MCF 10A (cell line): ENCODE measurements at regions of chr4 and their contacts with region 1.

Region 1: GRCh38 chr4:39638354-39639240 is at the start of gene SMIM14:
- DNase-seq: peak; percentile 98
- H3K4me3 Mint-ChIP-seq: peak within 1 kb of the TSS; percentile 87
- H3K27ac Mint-ChIP-seq: peak within 1 kb of the TSS; percentile 95
- H3K4me1 Mint-ChIP-seq: peaks cover 15% of the 10 kb centered on the region
- H3K27me3 Mint-ChIP-seq: no peaks in the 10 kb centered on the region
- CTCF ChIP-seq: no peak
- total RNA-seq, gene SMIM14: 27.3 and 36.0 TPM in 2 replicates

Region 2: DNA sequence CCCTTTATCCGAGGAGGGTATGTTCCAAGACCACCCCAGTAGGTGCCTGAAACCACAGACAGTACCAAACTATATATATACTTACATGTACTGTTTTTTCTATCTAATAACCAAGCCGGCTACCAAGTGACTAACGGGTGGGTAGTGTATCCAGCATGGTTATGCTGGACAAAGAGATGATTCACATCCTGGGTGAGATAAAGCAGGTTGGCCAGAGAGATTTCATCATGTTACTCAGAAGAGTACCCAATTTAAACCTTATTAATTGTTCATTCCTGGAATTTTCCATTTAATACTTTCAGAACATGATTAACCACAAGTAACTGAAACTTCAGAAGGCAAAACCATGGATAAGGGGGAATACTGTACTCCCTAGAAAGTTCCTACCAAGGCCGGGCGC is 318.9 kb before region 1 on chr4:
- CTCF ChIA-PET with region 1: no interaction called
- POLR2A ChIA-PET with region 1: no interaction called
- intact Hi-C with region 1: no loop called
- DNase-seq: peak; percentile 89
- H3K4me3 Mint-ChIP-seq: no peak overlapping the region
- H3K27ac Mint-ChIP-seq: peak overlapping the region; percentile 75
- H3K4me1 Mint-ChIP-seq: peaks cover 7% of the 10 kb centered on the region
- H3K27me3 Mint-ChIP-seq: no peaks in the 10 kb centered on the region
- CTCF ChIP-seq: no peak

Region 3: DNA sequence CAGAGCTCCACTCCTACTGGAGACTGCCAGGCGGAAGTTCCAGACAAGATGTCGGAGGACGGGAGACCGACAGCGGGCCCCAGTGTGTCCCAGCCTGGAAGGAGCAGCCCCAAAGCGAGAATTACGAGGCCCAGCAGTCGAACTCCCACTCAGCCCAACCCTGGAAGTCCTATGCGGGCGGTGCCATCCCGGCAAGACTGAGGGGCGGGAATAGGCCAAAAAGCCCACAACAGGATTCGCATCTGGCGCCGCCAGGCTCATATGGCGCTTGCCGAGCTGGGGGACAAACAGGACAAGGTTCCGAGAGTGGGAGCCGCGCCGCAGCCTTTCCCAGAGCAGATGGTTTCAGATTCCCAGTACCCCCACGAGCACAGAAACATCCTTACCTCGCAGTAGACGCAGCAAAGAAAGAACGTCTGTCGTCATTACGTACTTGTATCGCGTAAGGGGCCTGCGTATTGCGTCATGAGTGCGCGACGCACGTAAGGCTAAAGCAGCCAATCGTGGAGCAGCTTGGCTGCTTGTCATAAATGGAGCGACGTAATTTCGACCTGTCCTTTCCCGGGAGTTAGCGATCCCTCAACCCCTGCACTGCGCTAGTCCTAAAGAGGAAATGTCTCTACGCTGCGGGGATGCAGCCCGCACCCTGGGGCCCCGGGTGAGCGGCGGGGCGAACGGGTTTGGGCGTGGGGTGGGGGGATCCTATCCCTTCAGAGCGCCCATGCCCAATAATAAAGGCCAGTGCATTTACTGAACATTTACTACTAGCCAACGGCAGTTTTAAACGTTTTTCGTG is 179.9 kb before region 1 on chr4 and contains the starts of genes LIAS and RPL9:
- CTCF ChIA-PET with region 1: no interaction called
- POLR2A ChIA-PET with region 1: interaction called, 79 read pairs
- intact Hi-C with region 1: no loop called
- DNase-seq: peak; percentile 98
- H3K4me3 Mint-ChIP-seq: peak within 1 kb of the TSS; percentile 95
- H3K27ac Mint-ChIP-seq: peak within 1 kb of the TSS; percentile 100
- H3K4me1 Mint-ChIP-seq: peaks cover 7% of the 10 kb centered on the region
- H3K27me3 Mint-ChIP-seq: no peaks in the 10 kb centered on the region
- CTCF ChIP-seq: no peak
- total RNA-seq, gene LIAS: 21.6 and 24.6 TPM in 2 replicates
- total RNA-seq, gene RPL9: 1,405 and 1,620 TPM in 2 replicates

Region 4: DNA sequence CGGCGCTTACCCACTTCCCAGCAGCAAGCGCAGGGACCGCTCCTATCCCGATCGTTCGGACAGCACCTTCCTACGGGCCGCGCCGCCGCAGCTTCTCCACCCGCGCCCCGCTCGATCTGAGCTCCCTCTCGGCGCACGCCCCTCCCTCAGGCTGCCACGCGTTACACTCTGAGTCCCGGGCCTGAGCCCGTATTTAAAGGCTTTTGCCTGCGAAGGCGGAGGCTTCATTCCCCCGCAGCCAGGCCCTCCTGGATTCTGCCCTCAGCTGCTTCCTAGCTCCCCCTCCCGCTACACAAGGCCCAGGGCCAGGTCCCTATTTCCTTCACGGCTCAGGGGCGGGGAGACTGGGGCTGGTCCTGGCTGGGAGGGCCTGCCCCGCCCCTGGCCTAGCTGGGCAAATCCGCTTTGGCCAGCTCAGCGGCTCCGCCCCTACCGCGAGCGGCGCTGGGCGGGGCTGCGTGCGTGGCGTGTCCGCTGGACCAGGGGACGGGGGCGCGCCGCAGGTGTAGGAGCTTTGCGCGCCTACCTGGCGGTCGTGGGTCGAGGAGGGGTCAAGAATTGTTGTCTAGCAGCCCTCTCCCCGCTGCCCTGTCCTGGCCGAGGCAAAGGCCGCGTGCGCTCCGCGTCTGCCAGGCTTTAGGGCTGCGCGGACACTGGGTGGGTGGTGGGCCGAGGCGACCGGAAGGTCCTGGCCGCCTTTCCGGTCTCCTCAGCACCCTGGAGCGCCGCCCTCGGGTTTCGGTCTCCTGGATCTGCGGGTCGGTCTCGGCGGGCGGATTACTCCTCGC is 111.1 kb before region 1 on chr4 and contains the start of gene UGDH:
- CTCF ChIA-PET with region 1: interaction called, 4 read pairs
- POLR2A ChIA-PET with region 1: interaction called, 59 read pairs
- intact Hi-C with region 1: loop called (anchors 1 kb)
- DNase-seq: peak; percentile 98
- H3K4me3 Mint-ChIP-seq: peak within 1 kb of the TSS; percentile 98
- H3K27ac Mint-ChIP-seq: peak within 1 kb of the TSS; percentile 94
- H3K4me1 Mint-ChIP-seq: peaks cover 9% of the 10 kb centered on the region
- H3K27me3 Mint-ChIP-seq: no peaks in the 10 kb centered on the region
- CTCF ChIP-seq: no peak
- total RNA-seq, gene UGDH: 50.9 and 61.7 TPM in 2 replicates

Region 5: DNA sequence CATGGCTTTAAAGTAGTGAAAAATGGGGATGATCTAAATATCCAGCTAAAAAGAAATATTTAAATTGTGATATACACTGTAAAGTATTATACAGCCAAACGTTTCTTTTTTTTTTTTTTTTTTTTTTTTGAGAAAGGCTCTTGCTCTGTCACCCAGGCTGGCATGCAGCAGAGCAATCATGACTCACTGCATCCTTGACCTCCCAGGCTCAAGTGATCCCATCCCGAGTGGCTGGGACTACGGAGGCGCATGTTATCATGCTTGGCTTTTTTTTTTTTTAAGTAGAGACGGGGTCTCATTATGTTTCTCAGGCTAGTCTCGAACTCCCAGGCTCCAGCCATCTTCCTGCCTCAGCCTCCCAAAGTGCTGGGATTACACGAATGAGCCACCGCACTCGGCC is 17.0 kb before region 1 on chr4:
- CTCF ChIA-PET with region 1: interaction called, 7 read pairs
- POLR2A ChIA-PET with region 1: interaction called, 71 read pairs
- intact Hi-C with region 1: loop called (anchors 1 kb)
- DNase-seq: peak; percentile 81
- H3K4me3 Mint-ChIP-seq: no peak overlapping the region
- H3K27ac Mint-ChIP-seq: no peak overlapping the region
- H3K4me1 Mint-ChIP-seq: peaks cover 7% of the 10 kb centered on the region
- H3K27me3 Mint-ChIP-seq: no peaks in the 10 kb centered on the region
- CTCF ChIP-seq: no peak

Region 6: DNA sequence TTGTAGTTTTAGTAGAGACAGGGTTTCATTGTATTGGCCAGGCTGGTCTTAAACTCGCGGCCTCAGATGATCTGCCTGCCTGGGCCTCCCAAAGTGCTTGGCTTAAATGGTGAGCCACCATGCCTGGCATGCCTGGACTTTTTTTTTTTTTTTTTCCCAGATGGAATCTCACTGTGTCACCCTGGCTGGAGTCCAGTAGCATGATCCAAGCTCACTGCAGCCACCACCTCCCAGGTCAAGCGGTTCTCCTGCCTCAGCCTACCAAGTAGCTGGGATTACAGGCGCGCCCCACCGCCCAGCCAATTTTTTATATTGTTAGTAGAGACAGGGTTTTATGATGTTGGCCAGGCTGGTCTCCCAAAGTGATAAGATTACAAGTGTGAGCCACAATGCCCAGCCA is 67.7 kb after region 1 on chr4:
- CTCF ChIA-PET with region 1: no interaction called
- POLR2A ChIA-PET with region 1: interaction called, 112 read pairs
- intact Hi-C with region 1: no loop called
- DNase-seq: peak; percentile 80
- H3K4me3 Mint-ChIP-seq: peak overlapping the region; percentile 14
- H3K27ac Mint-ChIP-seq: peak overlapping the region; percentile 63
- H3K4me1 Mint-ChIP-seq: peaks cover 13% of the 10 kb centered on the region
- H3K27me3 Mint-ChIP-seq: no peaks in the 10 kb centered on the region
- CTCF ChIP-seq: no peak